Transverse colon (tissue), 4 donors: ENCODE measurements at regions of chr2 and their contacts with region 1.

Region 1: GRCh38 chr2:86562922-86563649 is at the start of gene CHMP3:
- DNase-seq: peak; percentile 97
- H3K4me3 ChIP-seq: peak within 1 kb of the TSS; percentile 67 to 82 (median 70)
- H3K27ac ChIP-seq: peak within 1 kb of the TSS; percentile 97 to 98 (median 98)
- H3K4me1 ChIP-seq: peaks cover 0 to 23% (median 10%) of the 10 kb centered on the region in 4 donors
- H3K27me3 ChIP-seq: no peaks in the 10 kb centered on the region
- CTCF ChIP-seq: peak in 1 of 5 experiments; percentile 15
- EP300 ChIP-seq: no peak
- POLR2A ChIP-seq: peak; percentile 89
- total RNA-seq, gene CHMP3: 83.8 to 200 (median 101) TPM

Region 2: DNA sequence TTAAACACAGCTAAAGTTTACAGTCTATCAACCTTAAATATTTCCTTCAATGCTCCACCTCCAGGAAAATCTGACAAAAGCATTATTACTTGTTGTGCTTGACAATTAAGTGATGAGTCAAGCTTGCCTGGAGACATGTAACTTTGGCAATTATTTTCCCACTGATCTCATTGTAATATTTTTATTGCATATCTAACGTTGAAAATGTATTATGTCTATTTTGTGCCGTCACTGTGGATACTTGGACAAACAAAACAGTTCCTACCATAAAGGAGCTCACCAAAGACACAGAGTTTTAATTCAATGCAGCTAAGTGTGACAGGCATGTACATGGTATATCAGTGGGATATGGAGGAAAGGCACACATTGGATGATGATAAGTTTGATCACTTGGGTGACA is 35.9 kb after region 1 on chr2:
- in situ Hi-C with region 1: no loop called
- intact Hi-C with region 1: no loop called
- DNase-seq: no peak
- H3K4me3 ChIP-seq: no peak overlapping the region
- H3K27ac ChIP-seq: peak overlapping the region in 1 of 4 donors; percentile 27
- H3K4me1 ChIP-seq: no peaks in the 10 kb centered on the region
- H3K27me3 ChIP-seq: no peaks in the 10 kb centered on the region
- CTCF ChIP-seq: no peak
- EP300 ChIP-seq: no peak
- POLR2A ChIP-seq: no peak

Region 3: DNA sequence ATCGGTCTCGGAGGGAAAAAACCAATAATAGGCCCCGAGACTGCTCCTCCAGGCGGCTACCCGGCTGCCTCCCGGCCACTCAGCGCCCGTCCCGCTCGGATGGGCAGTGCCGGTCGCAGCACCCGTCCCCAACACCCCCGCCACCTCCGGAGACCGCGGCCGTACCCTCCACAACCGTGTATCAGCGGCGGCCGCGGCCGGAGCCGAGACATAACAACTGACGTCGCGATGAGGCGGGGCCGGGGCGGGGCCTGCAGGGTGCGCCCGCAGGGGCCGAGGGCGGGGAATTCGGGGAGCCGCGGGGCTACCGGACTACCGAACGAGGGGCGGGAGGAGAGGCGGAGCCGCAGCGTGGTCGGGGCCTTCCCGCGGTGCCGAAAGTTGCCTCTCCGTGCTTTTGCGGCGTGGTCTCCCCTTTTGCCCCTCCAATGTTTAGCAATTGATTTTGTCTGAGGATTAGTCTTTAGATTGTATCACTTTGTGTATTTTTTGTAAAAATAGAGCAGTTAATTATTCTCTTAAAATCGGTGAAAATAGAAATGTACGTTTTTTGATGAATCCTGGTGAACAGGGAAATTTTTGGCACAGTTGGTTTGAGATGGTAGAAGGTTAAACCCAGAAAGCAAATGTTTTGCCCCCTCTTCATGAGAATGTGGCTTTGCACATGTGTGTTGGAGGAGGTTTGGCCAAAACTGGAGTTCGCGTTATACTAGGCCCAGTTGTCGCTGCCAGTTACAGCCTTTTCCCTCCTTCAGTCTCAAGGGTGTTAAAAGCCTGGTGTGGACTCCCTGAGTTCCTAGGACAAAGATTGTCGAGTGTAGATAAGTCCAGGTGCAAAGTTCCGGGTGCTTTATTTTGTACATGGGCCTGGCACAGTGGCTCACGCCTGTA is 60.8 kb after region 1 on chr2 and contains the start of gene RNF103:
- in situ Hi-C with region 1: loop called in 1 of 4 experiments (anchors 10 kb)
- intact Hi-C with region 1: no loop called
- DNase-seq: peak; percentile 98
- H3K4me3 ChIP-seq: peak within 1 kb of the TSS; percentile 64 to 98 (median 90)
- H3K27ac ChIP-seq: peak within 1 kb of the TSS; percentile 96 to 100 (median 100)
- H3K4me1 ChIP-seq: peaks cover 4 to 48% (median 27%) of the 10 kb centered on the region in 4 donors
- H3K27me3 ChIP-seq: no peaks in the 10 kb centered on the region
- CTCF ChIP-seq: peak in 1 of 5 experiments; percentile 18
- EP300 ChIP-seq: no peak
- POLR2A ChIP-seq: peak; percentile 99
- total RNA-seq, gene RNF103: 47.0 to 114 (median 103) TPM

Region 4: GRCh38 chr2:86675511-86676015 is 112.5 kb after region 1 on chr2:
- in situ Hi-C with region 1: loop called in 1 of 4 experiments (anchors 25 kb)
- intact Hi-C with region 1: no loop called
- DNase-seq: peak; percentile 27
- H3K4me3 ChIP-seq: no peak overlapping the region
- H3K27ac ChIP-seq: peak overlapping the region in 3 of 4 donors; percentile 20 to 45 (median 44)
- H3K4me1 ChIP-seq: peaks cover 8 to 20% (median 14%) of the 10 kb centered on the region in 4 donors
- H3K27me3 ChIP-seq: no peaks in the 10 kb centered on the region
- CTCF ChIP-seq: peak; percentile 33 to 54 (median 38)
- EP300 ChIP-seq: no peak
- POLR2A ChIP-seq: no peak